Aorta (tissue), 5 donors: ENCODE measurements at regions of chr5 and their contacts with region 1.

Region 1: GRCh38 chr5:148998174-148998797 is 64.6 kb downstream of the SH3TC2 start:
- DNase-seq: no peak
- ATAC-seq: peak; percentile 64
- H3K4me3 ChIP-seq: no peak overlapping the region
- H3K27ac ChIP-seq: no peak overlapping the region
- H3K4me1 ChIP-seq: peaks cover 0 to 1% of the 10 kb centered on the region in 2 donors
- H3K27me3 ChIP-seq: no peaks in the 10 kb centered on the region

Region 2: GRCh38 chr5:148740966-148741742 is 257.1 kb before region 1 on chr5:
- intact Hi-C with region 1: loop called (anchors 2 kb)
- DNase-seq: no peak
- ATAC-seq: peak; percentile 76
- H3K4me3 ChIP-seq: no peak overlapping the region
- H3K27ac ChIP-seq: no peak overlapping the region
- H3K4me1 ChIP-seq: peaks cover 3 to 5% of the 10 kb centered on the region in 2 donors
- H3K27me3 ChIP-seq: no peaks in the 10 kb centered on the region

Region 3: DNA sequence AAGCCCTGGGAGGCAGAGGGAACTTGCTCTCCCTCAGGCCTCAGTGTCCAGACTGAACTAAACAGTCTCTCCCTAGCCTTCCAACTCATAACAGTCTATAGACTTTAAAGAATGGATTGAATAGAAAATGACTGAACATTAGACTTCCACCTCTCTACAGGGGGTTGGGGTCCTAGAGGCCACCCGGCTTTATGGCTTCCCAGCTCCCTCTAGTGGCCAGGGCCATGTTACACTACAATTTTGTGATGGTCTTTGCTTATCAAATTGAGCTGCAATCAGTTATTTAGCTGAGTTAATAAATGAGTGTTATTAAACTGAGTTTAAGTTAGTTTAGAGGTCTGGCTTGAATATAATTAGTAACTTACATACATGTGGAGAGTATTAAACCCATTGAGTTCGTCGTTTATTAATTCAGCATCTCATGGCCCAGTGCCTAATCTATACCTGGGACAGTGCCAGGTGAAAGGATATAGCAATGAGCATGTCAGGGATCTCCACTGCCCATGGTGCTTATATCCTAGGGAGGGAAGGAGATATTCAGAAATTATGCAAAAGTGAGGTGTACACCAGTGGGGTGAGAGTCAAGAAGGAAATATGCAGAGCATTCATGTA is 40.6 kb before region 1 on chr5:
- intact Hi-C with region 1: no loop called
- DNase-seq: no peak
- ATAC-seq: no peak
- H3K4me3 ChIP-seq: no peak overlapping the region
- H3K27ac ChIP-seq: no peak overlapping the region
- H3K4me1 ChIP-seq: no peaks in the 10 kb centered on the region
- H3K27me3 ChIP-seq: no peaks in the 10 kb centered on the region